ENCODE measurements at regions of chr7 and their contacts with region 1.

Region 1: GRCh38 chr7:16420649-16421332 is 547 bp downstream of the CRPPA start:
- DNase-seq: peak; percentile 90 to 92
- H3K4me3 ChIP-seq: peak overlapping the region; percentile 68
- H3K27ac ChIP-seq: peak overlapping the region; percentile 89
- H3K4me1 ChIP-seq: peaks cover 56% of the 10 kb centered on the region
- H3K27me3 ChIP-seq: no peaks in the 10 kb centered on the region
- CTCF ChIP-seq: peak; percentile 53; the same call in 1 of the 2 replicates

Region 2: GRCh38 chr7:16178092-16178491 is 242.7 kb before region 1 on chr7:
- CTCF ChIA-PET with region 1: no interaction called
- POLR2A ChIA-PET with region 1: interaction called, 17 read pairs
- intact Hi-C with region 1: no loop called
- DNase-seq: no peak
- H3K4me3 ChIP-seq: no peak overlapping the region
- H3K27ac ChIP-seq: no peak overlapping the region
- H3K4me1 ChIP-seq: no peaks in the 10 kb centered on the region
- H3K27me3 ChIP-seq: no peaks in the 10 kb centered on the region
- CTCF ChIP-seq: no peak

Region 3: GRCh38 chr7:16318989-16319915 is 101.5 kb before region 1 on chr7:
- CTCF ChIA-PET with region 1: no interaction called
- POLR2A ChIA-PET with region 1: interaction called, 11 read pairs
- intact Hi-C with region 1: loop called (anchors 1 kb)
- DNase-seq: peak; percentile 22 to 98
- H3K4me3 ChIP-seq: 0 out of 2 replicates have a peak overlapping the region, but pooled peaks have one; percentile 1
- H3K27ac ChIP-seq: peak overlapping the region; percentile 61
- H3K4me1 ChIP-seq: peaks cover 36% of the 10 kb centered on the region
- H3K27me3 ChIP-seq: no peaks in the 10 kb centered on the region
- CTCF ChIP-seq: no peak

Region 4: DNA sequence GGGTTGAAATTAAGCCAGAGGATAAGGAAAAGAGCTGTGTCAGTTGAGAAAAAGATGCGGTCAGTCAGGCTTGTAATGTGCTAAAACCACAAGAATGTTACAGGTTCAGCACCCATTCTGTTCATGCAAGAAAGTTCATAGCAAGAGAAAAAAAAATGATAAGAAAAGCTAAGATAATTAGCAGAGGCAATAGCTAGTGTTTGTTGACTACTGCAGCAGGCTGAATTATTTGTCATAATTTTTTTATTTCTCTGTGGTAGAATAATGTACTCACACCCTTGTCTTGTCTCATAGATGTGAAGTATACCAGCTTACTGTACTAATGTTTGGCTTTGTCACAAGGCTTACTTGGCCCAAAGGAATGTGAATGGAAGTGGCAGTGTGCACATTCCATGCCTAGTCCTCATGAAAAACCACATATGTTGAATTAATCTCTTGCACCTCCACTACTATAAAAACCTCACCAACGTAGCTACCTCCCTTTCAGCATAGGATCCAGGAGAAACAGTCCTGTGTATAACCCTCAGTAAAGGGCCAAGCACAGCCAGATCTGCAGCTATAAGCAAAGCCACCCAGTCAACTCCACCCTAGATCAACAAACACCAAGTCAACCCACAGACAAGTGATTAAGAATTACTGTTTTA is 74.3 kb before region 1 on chr7:
- CTCF ChIA-PET with region 1: no interaction called
- POLR2A ChIA-PET with region 1: interaction called, 39 read pairs
- intact Hi-C with region 1: loop called (anchors 1 kb)
- DNase-seq: peak; percentile 60 to 98
- H3K4me3 ChIP-seq: no peak overlapping the region; the same call in 1 of the 2 replicates
- H3K27ac ChIP-seq: peak overlapping the region; percentile 80
- H3K4me1 ChIP-seq: peaks cover 37% of the 10 kb centered on the region
- H3K27me3 ChIP-seq: no peaks in the 10 kb centered on the region
- CTCF ChIP-seq: no peak

Measured in PC-9 (cell line).